Heart left ventricle (tissue), 16 donors: ENCODE measurements at regions of chr3 and their contacts with region 1.

Region 1: DNA sequence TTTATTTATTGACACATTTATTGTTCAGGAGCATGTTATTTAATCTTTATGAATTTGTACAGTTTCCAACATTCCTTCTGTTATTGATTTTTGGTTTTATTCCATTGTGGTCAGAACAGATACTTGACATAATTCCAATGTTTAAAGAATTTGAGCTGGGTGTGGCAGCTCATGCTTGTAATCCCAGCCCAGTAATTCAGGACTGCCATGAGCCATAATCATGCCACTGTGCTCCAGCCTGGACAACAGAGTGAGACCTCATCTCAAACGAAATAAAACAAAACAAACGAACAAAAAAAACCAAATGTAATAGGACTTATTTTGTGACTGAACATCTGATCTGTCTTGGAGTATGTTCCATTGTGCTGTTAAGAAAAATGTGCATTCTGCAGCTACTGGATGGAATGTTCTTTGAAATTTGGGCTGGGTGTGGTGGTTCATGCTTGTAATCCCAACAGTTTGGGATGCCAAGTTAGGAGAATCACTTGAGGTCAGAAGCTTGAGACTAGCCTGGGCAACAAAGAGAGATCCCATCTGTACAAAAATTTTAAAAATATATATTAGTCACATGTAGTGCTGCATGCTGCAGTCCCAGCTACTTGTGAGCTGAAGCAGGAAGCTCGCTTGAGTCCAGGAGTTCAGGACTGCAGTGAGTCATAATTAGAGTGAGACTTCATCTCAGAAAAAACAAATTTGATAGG is 62.7 kb upstream of the PLSCR4 start:
- DNase-seq: no peak
- ATAC-seq: peak in 3 of 4 donors; percentile 29 to 68 (median 33)
- H3K4me3 ChIP-seq: no peak overlapping the region
- H3K27ac ChIP-seq: peak overlapping the region in 4 of 12 donors; percentile 0 to 13 (median 4)
- H3K4me1 ChIP-seq: peaks cover 0 to 14% (median 6%) of the 10 kb centered on the region in 12 donors
- H3K27me3 ChIP-seq: no peaks in the 10 kb centered on the region
- CTCF ChIP-seq: no peak
- POLR2A ChIP-seq: no peak

Region 2: DNA sequence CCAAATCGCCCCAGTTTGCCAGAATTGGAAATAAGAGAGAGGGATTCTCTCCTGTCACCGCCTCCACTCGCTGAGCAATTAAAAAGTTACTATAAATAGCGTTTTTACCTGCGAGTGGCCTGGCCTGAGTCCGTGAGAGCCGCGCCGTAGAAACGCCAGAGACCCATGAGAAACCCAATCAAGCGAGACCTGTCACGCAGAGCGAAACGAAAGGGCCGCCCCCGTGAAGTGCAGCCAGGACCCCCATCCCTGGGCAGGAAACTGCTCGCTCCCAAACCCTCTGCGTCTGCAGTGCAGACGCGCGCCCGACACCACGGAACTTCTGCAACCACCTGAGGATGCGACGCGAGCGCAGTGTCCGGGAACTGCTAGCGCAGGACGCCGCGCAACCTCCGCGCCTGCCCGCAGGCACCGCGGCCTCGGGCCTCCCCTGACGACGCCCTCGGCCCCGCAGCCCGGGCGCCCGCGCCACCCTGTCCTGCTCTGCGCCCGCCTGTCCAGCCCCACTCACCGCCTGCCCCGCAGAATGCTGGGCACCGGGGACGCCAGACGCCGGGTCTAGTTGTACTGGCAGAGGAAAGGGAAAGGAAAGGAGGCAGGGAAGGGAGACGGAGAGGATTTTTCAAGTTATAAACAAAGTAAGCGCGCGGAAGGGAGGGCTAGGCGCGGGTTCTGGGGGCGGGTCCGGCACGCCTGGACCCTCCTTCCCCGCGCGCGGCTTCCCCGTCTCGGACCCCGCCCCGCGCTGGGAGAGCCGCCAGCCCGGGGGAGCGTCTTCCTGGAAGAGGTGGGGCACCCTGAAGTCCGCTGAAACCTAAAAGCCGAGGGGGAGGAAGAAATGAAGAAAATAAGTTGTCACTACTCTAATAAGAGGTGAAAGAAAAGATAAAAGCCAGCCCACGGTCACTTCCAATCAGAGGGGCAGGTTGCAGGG is 62.8 kb before region 1 on chr3 and contains the start of gene PLSCR4:
- intact Hi-C with region 1: loop called in 1 of 10 experiments (anchors 5 kb)
- DNase-seq: peak; percentile 82 to 91 (median 87)
- ATAC-seq: peak; percentile 87 to 97 (median 96)
- H3K4me3 ChIP-seq: peak within 1 kb of the TSS; percentile 62 to 87 (median 78)
- H3K27ac ChIP-seq: peak within 1 kb of the TSS; percentile 77 to 96 (median 88)
- H3K4me1 ChIP-seq: peaks cover 0 to 21% (median 11%) of the 10 kb centered on the region in 12 donors
- H3K27me3 ChIP-seq: peaks cover 0 to 7% (median 0%) of the 10 kb centered on the region in 9 donors
- CTCF ChIP-seq: no peak
- POLR2A ChIP-seq: peak in 1 of 2 donors; percentile 51
- total RNA-seq, gene PLSCR4: 6.2 to 36.3 (median 13.8) TPM

Region 3: GRCh38 chr3:146277953-146278631 is 35.5 kb before region 1 on chr3:
- intact Hi-C with region 1: loop called in 1 of 10 experiments (anchors 5 kb)
- DNase-seq: peak in 3 of 5 donors; percentile 26 to 32 (median 31)
- ATAC-seq: peak; percentile 34 to 76 (median 72)
- H3K4me3 ChIP-seq: no peak overlapping the region
- H3K27ac ChIP-seq: peak overlapping the region in 7 of 12 donors; percentile 8 to 62 (median 32)
- H3K4me1 ChIP-seq: peaks cover 0 to 47% (median 5%) of the 10 kb centered on the region in 12 donors
- H3K27me3 ChIP-seq: no peaks in the 10 kb centered on the region
- CTCF ChIP-seq: no peak
- POLR2A ChIP-seq: no peak